Esophagus muscularis mucosa (tissue), 4 donors: ENCODE measurements at regions of chr11 and their contacts with region 1.

Region 1: DNA sequence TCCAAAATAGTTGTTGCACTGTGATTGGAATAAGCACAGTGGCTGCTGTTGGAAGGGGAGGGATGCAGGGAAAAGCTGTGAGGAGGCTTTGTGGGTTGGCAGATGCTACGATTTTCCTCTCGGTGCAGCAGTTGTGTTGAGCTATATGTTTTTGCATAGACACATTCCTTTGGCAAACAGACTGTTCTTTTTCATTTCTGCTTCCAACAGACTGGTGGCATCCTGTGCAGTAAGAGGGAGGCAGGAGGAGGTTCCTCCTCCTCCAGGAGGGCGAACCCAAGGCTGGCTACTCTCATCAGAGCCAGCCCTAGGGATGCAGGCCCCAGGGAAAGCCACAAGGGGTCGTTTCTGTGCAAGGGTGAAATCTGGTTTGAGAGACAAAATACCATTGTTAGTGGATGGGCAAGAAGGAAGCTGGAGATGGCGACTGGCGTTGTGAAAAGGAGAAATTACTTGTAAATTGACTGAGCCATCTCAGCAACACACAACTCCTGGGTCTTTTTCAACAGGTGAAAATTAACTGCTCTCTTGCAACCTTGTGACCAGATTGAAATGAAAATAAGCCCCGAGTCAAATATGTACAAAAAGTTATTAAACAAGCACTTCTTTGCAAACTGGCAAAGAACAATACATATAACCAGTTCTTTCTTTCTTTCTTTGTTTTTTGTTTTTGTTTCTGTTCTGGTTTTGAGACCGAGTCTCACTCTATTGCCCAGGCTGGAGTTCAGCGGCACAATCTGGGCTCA is 26.5 kb upstream of the UBASH3B start:
- DNase-seq: no peak
- H3K4me3 ChIP-seq: no peak overlapping the region
- H3K27ac ChIP-seq: no peak overlapping the region
- H3K4me1 ChIP-seq: peaks cover 0 to 9% (median 0%) of the 10 kb centered on the region in 4 donors
- H3K27me3 ChIP-seq: peaks cover 0 to 24% (median 0%) of the 10 kb centered on the region in 4 donors
- CTCF ChIP-seq: peak; percentile 74 to 91 (median 84)
- EP300 ChIP-seq: no peak
- POLR2A ChIP-seq: no peak

Region 2: DNA sequence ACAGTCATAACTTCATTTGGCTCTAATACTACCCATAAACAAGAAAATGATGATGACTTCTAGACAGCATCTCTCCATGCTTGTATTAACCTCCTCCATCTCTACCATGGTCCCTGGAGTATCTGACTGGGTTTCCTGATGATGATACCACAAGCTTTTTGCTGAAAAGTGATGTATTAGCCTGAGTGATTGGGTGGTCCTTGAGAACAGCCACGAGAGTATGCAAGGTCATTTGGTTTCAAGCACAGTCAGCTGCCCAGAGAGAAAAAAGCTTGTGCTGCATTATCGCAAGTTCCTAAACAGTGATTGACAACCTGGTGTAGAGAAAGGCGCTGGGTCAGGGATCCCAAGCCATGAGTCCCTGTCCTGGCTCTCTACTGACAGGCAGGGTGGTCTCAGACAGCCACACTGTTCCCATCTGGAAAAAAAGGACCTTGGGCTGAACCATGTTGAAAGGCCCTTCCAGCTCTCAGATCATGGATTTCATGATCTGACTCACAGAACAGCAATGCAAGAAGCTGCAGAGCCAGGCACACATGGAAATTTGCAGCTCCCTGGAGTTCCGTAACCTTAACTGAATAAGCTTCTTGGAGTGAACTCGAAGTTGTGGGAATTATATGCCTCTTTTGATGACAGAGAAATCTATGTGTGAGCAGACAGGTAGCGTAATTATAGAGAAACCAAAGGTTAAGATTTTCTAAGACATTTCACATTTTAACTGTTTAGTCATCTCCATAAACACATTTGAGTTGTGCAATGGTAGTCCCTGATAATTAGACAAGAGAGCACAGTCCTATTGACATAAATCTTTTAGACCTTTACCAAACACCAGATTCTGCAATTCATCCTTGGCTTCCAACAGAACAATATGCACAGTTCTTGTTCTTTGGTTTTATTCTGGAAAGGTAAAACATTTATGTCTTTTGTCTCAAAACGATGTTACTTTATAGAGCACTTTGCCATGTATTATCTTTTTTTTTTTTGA is 27.6 kb before region 1 on chr11:
- intact Hi-C with region 1: no loop called
- DNase-seq: no peak
- H3K4me3 ChIP-seq: no peak overlapping the region
- H3K27ac ChIP-seq: no peak overlapping the region
- H3K4me1 ChIP-seq: no peaks in the 10 kb centered on the region
- H3K27me3 ChIP-seq: no peaks in the 10 kb centered on the region
- CTCF ChIP-seq: no peak
- EP300 ChIP-seq: no peak
- POLR2A ChIP-seq: no peak

Region 3: DNA sequence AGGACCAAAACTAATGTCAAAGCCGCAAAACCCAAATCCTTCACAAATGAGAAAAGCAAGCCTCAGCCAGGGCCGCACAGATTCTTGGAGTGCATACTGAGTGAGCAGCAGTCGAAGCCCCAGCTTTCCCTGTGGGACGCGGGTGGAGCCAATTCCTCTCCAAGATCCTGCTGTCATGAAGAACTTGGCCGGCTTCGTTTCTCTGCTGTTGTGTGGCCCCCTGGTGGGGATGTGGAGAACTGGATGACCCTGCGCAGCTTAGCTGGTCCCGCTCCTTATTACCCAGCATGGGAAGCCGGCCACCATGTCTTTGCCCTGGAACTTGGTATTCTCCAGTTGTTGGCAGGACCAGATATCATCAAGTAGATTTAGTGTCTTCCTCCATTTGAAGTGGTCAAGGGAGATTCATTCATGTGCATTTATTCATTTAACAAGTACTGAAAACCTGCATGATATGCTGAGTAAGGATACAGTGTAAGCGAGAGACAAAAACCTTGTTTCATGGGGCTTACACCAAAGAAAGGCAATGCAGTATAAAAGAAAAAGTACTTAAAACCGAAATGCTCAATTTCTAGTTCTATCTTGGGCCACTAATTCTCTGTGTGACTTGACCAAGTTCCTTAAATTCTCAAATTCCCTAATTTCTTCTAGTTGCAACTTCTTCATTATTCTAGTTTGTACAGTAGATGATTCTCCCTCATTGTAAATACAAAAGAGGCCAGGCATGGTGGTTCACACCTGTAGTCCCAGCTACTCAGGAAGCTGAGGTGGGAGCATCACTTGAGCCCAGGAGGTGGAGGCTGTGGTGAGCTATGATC is 152.6 kb after region 1 on chr11:
- intact Hi-C with region 1: loop called (anchors 1 kb)
- DNase-seq: peak; percentile 98
- H3K4me3 ChIP-seq: no peak overlapping the region
- H3K27ac ChIP-seq: no peak overlapping the region
- H3K4me1 ChIP-seq: peaks cover 0 to 23% (median 18%) of the 10 kb centered on the region in 4 donors
- H3K27me3 ChIP-seq: no peaks in the 10 kb centered on the region
- CTCF ChIP-seq: peak; percentile 93 to 96 (median 95)
- EP300 ChIP-seq: no peak
- POLR2A ChIP-seq: no peak

Region 4: GRCh38 chr11:122853971-122854446 is 225.0 kb after region 1 on chr11:
- intact Hi-C with region 1: loop called (anchors 5 kb)
- DNase-seq: no peak
- H3K4me3 ChIP-seq: no peak overlapping the region
- H3K27ac ChIP-seq: no peak overlapping the region
- H3K4me1 ChIP-seq: no peaks in the 10 kb centered on the region
- H3K27me3 ChIP-seq: peaks cover 0 to 26% (median 0%) of the 10 kb centered on the region in 4 donors
- CTCF ChIP-seq: peak; percentile 64 to 70 (median 70)
- EP300 ChIP-seq: no peak
- POLR2A ChIP-seq: no peak

Region 5: DNA sequence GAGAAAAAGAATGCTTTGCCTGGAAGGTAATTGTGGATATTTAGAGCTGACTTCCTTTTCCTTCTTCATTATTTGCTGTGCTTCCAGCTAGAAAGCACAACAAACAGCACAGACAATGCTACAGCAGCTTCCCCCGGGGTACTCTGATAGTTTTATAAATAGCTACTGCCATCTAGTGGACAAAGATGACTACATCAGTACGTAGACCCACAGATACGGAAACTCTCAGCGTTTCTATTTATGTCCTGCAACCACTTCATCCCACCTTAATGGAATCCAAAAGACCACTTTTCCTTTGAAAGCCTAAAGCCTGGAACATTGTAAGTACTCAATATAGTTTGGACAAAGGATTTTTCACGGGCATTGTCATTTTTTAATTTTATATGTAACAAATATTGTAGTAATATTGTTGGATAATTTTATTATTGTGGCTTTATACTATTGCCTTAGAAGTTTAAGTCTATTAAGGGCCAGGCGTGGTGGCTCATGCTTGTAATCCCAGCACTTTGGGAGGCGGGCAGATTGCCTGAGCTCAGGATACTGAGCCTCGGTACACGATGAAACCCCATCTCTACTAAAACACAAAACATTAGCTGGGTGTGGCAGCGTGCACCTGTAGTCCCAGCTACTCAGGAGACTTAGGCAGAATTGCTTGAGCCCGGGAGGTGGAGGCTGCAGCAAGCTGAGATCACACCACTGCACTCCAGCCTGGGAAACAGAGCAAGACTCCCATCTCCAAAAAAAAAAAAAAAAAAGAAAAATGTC is 425.5 kb after region 1 on chr11:
- intact Hi-C with region 1: no loop called
- DNase-seq: no peak
- H3K4me3 ChIP-seq: no peak overlapping the region
- H3K27ac ChIP-seq: peak overlapping the region in 3 of 4 donors; percentile 5 to 33 (median 6)
- H3K4me1 ChIP-seq: peaks cover 41 to 58% (median 49%) of the 10 kb centered on the region in 4 donors
- H3K27me3 ChIP-seq: no peaks in the 10 kb centered on the region
- CTCF ChIP-seq: peak; percentile 63 to 74 (median 73)
- EP300 ChIP-seq: no peak
- POLR2A ChIP-seq: no peak